ENCODE measurements at regions of chr7 and their contacts with region 1.

Region 1: GRCh38 chr7:75914730-75915585 is at the start of gene POR:
- DNase-seq: peak; percentile 85
- ATAC-seq: peak; percentile 88
- H3K4me3 ChIP-seq: peak within 1 kb of the TSS; percentile 91 to 97 (median 95)
- H3K27ac ChIP-seq: peak within 1 kb of the TSS; percentile 92
- H3K4me1 ChIP-seq: peaks cover 70% of the 10 kb centered on the region
- H3K27me3 ChIP-seq: no peaks in the 10 kb centered on the region; a peak in 1 of 5 replicates
- CTCF ChIP-seq: peak; percentile 45; the same call in 1 of the 2 replicates
- EP300 ChIP-seq: peak; percentile 47 to 63; a peak in 3 of 4 replicates
- POLR2A ChIP-seq: peak; percentile 99
- RAD21 ChIP-seq: peak; percentile 88
- total RNA-seq, gene POR: 115 and 266 TPM in 2 replicates

Region 2: DNA sequence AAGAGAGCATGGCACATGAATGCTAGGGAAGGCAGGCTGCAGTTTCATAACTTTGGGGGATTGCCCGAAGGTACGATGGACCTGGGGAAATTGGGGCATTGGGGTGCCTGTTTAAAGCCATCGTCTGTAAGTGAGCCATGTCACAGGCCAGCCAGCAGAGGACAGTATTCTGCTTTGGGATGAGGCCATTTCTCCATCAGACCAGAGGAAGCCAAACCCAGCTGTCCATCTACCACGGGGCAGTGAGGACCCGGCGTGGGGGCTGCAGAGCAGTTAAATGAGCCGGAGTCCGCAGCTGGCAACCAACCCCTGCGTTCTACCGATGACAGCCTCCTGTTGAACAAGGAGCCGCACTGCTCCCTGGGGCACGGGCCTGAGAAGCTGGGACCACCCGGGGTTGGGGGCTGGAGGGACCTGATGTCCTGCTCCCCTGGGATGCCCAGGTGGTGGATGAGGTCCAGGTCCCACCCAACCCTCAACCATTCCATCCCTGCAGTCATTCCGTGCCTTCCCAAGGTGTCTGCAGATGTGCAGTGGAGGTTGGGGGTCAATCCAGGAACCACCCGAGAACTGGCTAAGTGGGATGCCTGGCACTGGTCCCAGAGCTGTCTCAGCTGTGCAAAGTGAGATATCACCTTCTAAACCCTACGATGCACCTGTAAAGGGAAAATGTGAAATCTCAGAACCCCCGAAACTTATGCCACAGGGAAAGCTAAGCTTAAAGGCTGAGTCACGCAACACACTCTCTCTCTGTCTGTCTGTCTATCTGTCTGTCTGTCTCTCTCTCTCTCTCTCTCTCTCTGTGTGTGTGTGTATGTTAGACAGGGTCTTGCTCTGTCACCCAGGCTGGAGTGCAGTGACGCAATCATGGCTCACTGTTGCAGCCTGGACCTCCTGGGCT is 48.2 kb before region 1 on chr7:
- CTCF ChIA-PET with region 1: no interaction called
- POLR2A ChIA-PET with region 1: interaction called, 17 read pairs
- in situ Hi-C with region 1: no loop called
- intact Hi-C with region 1: loop called (anchors 2 kb)
- DNase-seq: peak; percentile 70
- ATAC-seq: peak; percentile 97
- H3K4me3 ChIP-seq: peak overlapping the region in 2 of 3 experiments; percentile 16 to 67; a peak in 3 of 6 replicates
- H3K27ac ChIP-seq: no peak overlapping the region
- H3K4me1 ChIP-seq: peaks cover 21% of the 10 kb centered on the region
- H3K27me3 ChIP-seq: no peaks in the 10 kb centered on the region
- CTCF ChIP-seq: peak; percentile 99
- EP300 ChIP-seq: peak in 1 of 2 experiments; percentile 22; a peak in 1 of 4 replicates
- POLR2A ChIP-seq: no peak
- RAD21 ChIP-seq: peak; percentile 96

Region 3: DNA sequence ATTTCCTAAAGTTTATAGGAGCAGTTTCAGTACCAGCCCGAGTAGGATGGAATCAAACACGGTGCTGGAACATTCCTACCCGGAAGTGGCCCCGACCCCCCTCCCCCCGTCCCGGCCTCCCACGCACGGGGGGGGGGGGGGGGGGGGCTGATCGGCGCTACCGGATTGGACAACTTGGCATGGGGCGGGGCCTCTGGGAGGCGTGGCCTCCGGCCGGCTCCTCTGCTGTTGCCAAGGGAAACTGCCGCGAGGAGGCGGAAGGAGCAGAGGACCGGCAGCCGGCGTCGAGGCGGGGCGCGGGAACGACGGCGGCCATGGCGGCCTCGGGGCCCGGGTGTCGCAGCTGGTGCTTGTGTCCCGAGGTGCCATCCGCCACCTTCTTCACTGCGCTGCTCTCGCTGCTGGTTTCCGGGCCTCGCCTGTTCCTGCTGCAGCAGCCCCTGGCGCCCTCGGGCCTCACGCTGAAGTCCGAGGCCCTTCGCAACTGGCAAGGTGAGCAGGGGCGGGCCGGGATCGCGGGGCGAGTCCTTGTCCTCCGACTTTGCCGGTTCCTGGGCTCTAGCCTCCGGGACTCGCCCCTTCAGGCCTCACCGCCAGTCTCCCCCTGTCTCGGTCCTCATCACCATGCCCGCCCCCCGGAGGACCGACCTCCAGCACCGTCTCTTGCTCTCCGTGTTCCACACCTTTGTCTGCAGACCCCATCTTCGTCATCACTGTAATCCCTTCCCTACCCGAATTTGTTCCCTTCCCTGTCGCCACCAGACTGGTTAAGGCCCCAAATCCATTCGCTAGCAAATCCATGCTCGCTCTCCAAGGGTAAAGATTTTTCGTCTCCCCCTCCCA is 36.0 kb before region 1 on chr7 and contains the start of gene RHBDD2:
- CTCF ChIA-PET with region 1: no interaction called
- POLR2A ChIA-PET with region 1: interaction called, 14 read pairs
- in situ Hi-C with region 1: loop called (anchors 5 kb)
- intact Hi-C with region 1: no loop called
- DNase-seq: peak; percentile 84
- ATAC-seq: peak; percentile 96
- H3K4me3 ChIP-seq: peak within 1 kb of the TSS; percentile 80 to 96 (median 92)
- H3K27ac ChIP-seq: peak within 1 kb of the TSS; percentile 70
- H3K4me1 ChIP-seq: peaks cover 38% of the 10 kb centered on the region
- H3K27me3 ChIP-seq: no peaks in the 10 kb centered on the region; a peak in 1 of 5 replicates
- CTCF ChIP-seq: peak; percentile 52
- EP300 ChIP-seq: no peak; a peak in 1 of 4 replicates
- POLR2A ChIP-seq: peak; percentile 81 to 96
- RAD21 ChIP-seq: peak; percentile 67; the same call in 1 of the 2 replicates
- total RNA-seq, gene RHBDD2: 14.9 and 23.1 TPM in 2 replicates

Region 4: GRCh38 chr7:75925717-75926435 is 10.9 kb after region 1 on chr7:
- CTCF ChIA-PET with region 1: no interaction called
- POLR2A ChIA-PET with region 1: interaction called, 41 read pairs
- in situ Hi-C with region 1: no loop called
- intact Hi-C with region 1: no loop called
- DNase-seq: no peak
- ATAC-seq: no peak
- H3K4me3 ChIP-seq: no peak overlapping the region
- H3K27ac ChIP-seq: peak overlapping the region; percentile 63
- H3K4me1 ChIP-seq: peaks cover 66% of the 10 kb centered on the region
- H3K27me3 ChIP-seq: no peaks in the 10 kb centered on the region
- CTCF ChIP-seq: no peak
- EP300 ChIP-seq: no peak
- POLR2A ChIP-seq: no peak
- RAD21 ChIP-seq: no peak

Region 5: DNA sequence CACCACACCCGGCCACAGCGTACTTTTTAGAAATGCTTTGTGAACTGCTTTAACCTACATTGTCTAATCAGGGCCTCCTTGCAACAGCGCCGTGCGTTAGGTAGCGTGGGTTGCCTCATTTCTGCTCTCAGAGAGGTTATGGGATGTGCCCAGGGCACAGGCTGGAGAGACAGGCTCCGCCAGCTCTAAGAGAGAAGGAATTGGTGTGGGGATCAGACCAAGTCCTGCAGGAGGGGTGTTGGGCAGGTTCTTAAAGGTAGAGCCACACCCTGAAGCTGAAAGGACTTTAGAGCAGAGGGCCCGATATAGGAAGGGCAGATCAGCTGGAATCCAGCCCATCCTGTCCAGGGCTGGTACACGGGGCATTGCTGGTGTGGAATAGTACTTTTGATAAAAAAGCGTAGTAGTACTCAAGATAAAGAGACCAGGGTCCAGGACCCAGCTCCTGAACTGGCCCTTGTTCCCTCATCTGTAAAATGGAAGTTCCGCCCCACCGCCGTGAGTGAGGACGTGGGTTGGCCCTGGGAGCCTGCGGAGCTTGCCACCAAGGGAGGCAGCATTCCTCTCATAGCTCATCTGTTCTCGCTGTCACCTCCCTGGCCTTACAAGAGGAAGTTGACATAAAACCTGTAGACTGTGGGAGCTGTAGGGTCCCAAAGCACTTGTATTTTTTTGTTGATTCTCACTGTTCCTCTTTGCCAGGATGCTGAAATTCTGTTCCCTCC is 42.2 kb after region 1 on chr7:
- CTCF ChIA-PET with region 1: no interaction called
- POLR2A ChIA-PET with region 1: interaction called, 14 read pairs
- in situ Hi-C with region 1: loop called (anchors 5 kb)
- intact Hi-C with region 1: loop called (anchors 5 kb)
- DNase-seq: peak; percentile 47
- ATAC-seq: no peak
- H3K4me3 ChIP-seq: no peak overlapping the region
- H3K27ac ChIP-seq: peak overlapping the region; percentile 77
- H3K4me1 ChIP-seq: peaks cover 88% of the 10 kb centered on the region
- H3K27me3 ChIP-seq: no peaks in the 10 kb centered on the region
- CTCF ChIP-seq: no peak
- EP300 ChIP-seq: no peak
- POLR2A ChIP-seq: no peak
- RAD21 ChIP-seq: no peak

Region 6: GRCh38 chr7:75994388-75995051 is 79.6 kb after region 1 on chr7 and contains the start of gene TMEM120A:
- CTCF ChIA-PET with region 1: no interaction called
- POLR2A ChIA-PET with region 1: interaction called, 26 read pairs
- in situ Hi-C with region 1: no loop called
- intact Hi-C with region 1: loop called (anchors 2 kb)
- DNase-seq: peak; percentile 88
- ATAC-seq: peak; percentile 86
- H3K4me3 ChIP-seq: peak within 1 kb of the TSS; percentile 88 to 98 (median 91)
- H3K27ac ChIP-seq: peak within 1 kb of the TSS; percentile 97
- H3K4me1 ChIP-seq: peaks cover 34% of the 10 kb centered on the region
- H3K27me3 ChIP-seq: no peaks in the 10 kb centered on the region
- CTCF ChIP-seq: peak; percentile 25; the same call in 1 of the 2 replicates
- EP300 ChIP-seq: 0 out of 4 replicates have a peak, but pooled peaks of 1 of the 2 experiments have one; percentile 20
- POLR2A ChIP-seq: peak in 1 of 2 experiments; percentile 96; a peak in 2 of 4 replicates
- RAD21 ChIP-seq: peak; percentile 26; the same call in 1 of the 2 replicates
- total RNA-seq, gene TMEM120A: 22.9 and 40.3 TPM in 2 replicates

Measured in HepG2 (cell line).